OCI-LY7 (cell line): ENCODE measurements at regions of chr2 and their contacts with region 1.

Region 1: GRCh38 chr2:224585205-224586088 is at the start of gene CUL3:
- DNase-seq: peak; percentile 98
- H3K4me3 ChIP-seq: peak within 1 kb of the TSS; percentile 98
- H3K27ac ChIP-seq: peak within 1 kb of the TSS; percentile 92
- H3K4me1 ChIP-seq: peaks cover 51% of the 10 kb centered on the region
- CTCF ChIP-seq: no peak
- total RNA-seq, gene CUL3: 50.6 and 56.4 TPM in 2 replicates

Region 2: DNA sequence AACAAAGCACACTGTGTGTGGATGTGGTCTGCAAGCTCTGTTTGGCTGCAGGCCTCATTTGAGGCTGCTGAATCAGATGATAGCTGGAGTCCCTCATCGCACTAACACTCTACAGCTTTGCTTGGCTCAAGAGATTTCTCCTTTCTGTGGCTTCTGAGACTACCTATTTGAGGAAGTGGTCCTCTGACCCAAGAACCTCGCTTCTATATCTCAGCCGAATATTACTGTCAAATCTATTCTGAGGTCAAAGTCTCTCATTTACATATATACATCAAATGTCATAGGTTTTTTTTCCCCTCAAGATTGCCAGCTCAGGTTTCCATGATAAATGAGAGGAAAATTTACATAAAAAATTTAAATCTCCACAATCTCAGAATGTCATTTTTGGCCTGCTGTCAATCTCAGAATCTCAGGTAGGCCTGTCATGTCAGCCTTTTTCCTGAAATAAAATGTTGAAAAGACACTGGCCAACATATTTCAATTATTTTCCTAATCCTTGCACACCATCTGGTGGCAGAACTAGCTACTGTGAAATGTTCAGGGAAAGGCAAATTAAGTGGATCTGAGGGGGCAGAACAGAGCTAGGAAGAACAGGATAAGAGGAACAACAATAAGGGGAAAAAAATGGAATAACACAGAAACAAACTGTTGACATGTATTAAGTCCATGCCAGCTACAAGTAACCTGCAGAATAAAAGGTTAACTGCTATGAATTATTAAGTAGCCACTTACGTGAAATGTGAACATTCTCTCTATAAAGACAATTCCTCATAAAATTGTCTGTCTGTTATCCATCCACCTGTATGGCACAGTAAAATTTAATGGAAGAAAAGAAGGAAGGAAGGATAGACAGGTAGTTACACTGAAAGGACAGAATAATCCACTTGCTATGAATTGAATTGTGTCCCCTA is 787.4 kb before region 1 on chr2:
- CTCF ChIA-PET with region 1: no interaction called
- POLR2A ChIA-PET with region 1: no interaction called
- intact Hi-C with region 1: loop called (anchors 10 kb)
- DNase-seq: peak; percentile 83
- H3K4me3 ChIP-seq: peak overlapping the region; percentile 22
- H3K27ac ChIP-seq: peak overlapping the region; percentile 22
- H3K4me1 ChIP-seq: peaks cover 44% of the 10 kb centered on the region
- CTCF ChIP-seq: peak; percentile 72

Region 3: GRCh38 chr2:224436634-224437033 is 148.8 kb before region 1 on chr2:
- CTCF ChIA-PET with region 1: no interaction called
- POLR2A ChIA-PET with region 1: no interaction called
- intact Hi-C with region 1: no loop called
- DNase-seq: no peak
- H3K4me3 ChIP-seq: no peak overlapping the region
- H3K27ac ChIP-seq: no peak overlapping the region
- H3K4me1 ChIP-seq: no peaks in the 10 kb centered on the region
- CTCF ChIP-seq: no peak

Region 4: GRCh38 chr2:224492531-224492930 is 92.9 kb before region 1 on chr2:
- CTCF ChIA-PET with region 1: no interaction called
- POLR2A ChIA-PET with region 1: interaction called, 31 read pairs
- intact Hi-C with region 1: loop called (anchors 1 kb)
- DNase-seq: peak; percentile 45
- H3K4me3 ChIP-seq: peak overlapping the region; percentile 8
- H3K27ac ChIP-seq: peak overlapping the region; percentile 100
- H3K4me1 ChIP-seq: peaks cover 58% of the 10 kb centered on the region
- CTCF ChIP-seq: no peak

Region 5: DNA sequence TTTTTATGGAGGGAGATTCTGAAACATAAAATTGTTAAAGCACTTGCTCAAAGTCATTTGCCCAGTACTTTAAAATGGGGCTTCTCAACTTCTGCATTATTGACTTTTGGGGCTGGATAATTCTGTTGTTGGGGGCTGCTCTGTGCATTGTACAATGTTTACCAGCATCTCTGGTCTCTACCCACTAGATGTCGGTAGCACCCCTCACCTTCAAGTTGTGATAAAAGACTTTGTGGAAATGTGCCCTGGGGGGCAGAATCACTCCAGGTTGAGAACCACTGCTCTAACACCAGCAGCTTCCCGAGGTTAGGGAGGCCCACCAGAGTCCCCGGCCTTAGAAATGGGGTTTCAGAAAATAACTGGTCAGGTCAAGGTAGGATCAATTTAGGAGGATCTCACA is 26.5 kb after region 1 on chr2:
- CTCF ChIA-PET with region 1: no interaction called
- POLR2A ChIA-PET with region 1: interaction called, 16 read pairs
- intact Hi-C with region 1: no loop called
- DNase-seq: peak; percentile 80
- H3K4me3 ChIP-seq: no peak overlapping the region
- H3K27ac ChIP-seq: no peak overlapping the region
- H3K4me1 ChIP-seq: peaks cover 10% of the 10 kb centered on the region
- CTCF ChIP-seq: peak; percentile 93

Region 6: DNA sequence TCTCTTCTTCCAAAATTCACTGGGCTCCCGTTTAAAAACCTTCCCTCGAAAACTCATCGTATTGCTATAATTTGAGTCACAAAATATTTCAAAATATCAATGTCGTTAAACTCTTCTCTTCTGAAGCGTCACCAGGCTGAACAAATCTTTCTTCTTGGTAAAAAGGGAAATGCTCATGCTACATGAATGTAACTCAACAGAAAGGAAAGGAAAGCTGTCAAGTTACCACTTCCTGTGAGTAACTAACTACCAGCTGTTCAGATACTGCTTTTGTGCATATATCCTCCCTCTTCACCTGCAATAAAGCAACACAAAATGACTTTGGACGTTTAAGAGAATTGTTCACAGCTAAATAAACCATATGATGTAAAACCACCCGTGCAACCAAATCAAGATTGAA is 361.4 kb after region 1 on chr2:
- CTCF ChIA-PET with region 1: no interaction called
- POLR2A ChIA-PET with region 1: interaction called, 3 read pairs
- intact Hi-C with region 1: loop called (anchors 5 kb)
- DNase-seq: peak; percentile 86
- H3K4me3 ChIP-seq: peak overlapping the region; percentile 83
- H3K27ac ChIP-seq: peak overlapping the region; percentile 92
- H3K4me1 ChIP-seq: peaks cover 80% of the 10 kb centered on the region
- CTCF ChIP-seq: no peak